ENCODE measurements at regions of chr12 and their contacts with region 1.

Region 1: DNA sequence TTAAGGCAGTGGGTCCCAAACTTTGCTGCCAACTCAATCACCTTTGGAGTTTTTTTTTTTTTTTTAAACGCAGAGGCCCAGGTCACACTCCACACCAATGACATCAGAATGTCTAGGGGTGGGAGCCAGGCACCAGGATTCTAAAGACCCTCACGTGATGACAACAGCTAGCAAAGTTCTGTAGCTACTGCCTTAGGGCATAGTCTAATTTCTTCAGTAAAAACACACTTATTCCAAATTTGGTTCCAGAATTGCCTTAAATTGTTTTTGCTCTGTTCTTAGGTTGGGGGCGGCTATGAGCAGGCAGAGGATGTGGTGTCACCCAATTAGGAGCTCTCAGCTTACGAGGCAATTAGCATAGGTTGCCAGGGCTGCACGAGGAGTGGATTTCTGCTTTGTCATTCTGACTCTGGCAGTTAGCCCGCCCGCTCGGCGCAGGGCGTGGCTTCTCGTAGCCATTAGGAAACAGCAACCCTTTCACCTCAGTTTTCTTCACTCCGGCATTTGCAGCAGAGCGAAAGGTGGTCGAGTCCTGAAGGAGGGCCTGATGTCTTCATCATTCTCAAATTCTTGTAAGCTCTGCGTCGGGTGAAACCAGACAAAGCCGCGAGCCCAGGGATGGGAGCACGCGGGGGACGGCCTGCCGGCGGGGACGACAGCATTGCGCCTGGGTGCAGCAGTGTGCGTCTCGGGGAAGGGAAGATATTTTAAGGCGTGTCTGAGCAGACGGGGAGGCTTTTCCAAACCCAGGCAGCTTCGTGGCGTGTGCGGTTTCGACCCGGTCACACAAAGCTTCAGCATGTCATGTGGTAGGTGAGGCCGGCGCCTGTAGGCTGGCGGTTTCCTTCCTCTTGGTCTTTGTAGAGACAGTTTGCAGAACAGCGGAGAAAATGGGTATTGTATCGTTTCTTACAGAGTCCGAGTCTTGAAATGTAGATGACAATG is 16.7 kb upstream of the EID3 start:
- DNase-seq: peak; percentile 94
- H3K4me3 Mint-ChIP-seq: peak overlapping the region; percentile 96
- H3K27ac Mint-ChIP-seq: peak overlapping the region; percentile 98
- H3K4me1 Mint-ChIP-seq: peaks cover 12% of the 10 kb centered on the region
- H3K27me3 Mint-ChIP-seq: no peaks in the 10 kb centered on the region

Region 2: GRCh38 chr12:103956516-103957027 is 330.2 kb before region 1 on chr12:
- CTCF ChIA-PET with region 1: no interaction called
- intact Hi-C with region 1: loop called (anchors 1 kb)
- DNase-seq: peak; percentile 15
- H3K4me3 Mint-ChIP-seq: peak overlapping the region; percentile 92
- H3K27ac Mint-ChIP-seq: peak overlapping the region; percentile 93
- H3K4me1 Mint-ChIP-seq: peaks cover 48% of the 10 kb centered on the region
- H3K27me3 Mint-ChIP-seq: no peaks in the 10 kb centered on the region

Region 3: GRCh38 chr12:104137913-104138796 is 148.7 kb before region 1 on chr12 and contains the start of gene NFYB:
- CTCF ChIA-PET with region 1: no interaction called
- intact Hi-C with region 1: loop called (anchors 1 kb)
- DNase-seq: peak; percentile 95
- H3K4me3 Mint-ChIP-seq: peak within 1 kb of the TSS; percentile 84
- H3K27ac Mint-ChIP-seq: peak within 1 kb of the TSS; percentile 84
- H3K4me1 Mint-ChIP-seq: peaks cover 14% of the 10 kb centered on the region
- H3K27me3 Mint-ChIP-seq: no peaks in the 10 kb centered on the region
- total RNA-seq, gene NFYB: 23.3 to 28.3 TPM

Region 4: DNA sequence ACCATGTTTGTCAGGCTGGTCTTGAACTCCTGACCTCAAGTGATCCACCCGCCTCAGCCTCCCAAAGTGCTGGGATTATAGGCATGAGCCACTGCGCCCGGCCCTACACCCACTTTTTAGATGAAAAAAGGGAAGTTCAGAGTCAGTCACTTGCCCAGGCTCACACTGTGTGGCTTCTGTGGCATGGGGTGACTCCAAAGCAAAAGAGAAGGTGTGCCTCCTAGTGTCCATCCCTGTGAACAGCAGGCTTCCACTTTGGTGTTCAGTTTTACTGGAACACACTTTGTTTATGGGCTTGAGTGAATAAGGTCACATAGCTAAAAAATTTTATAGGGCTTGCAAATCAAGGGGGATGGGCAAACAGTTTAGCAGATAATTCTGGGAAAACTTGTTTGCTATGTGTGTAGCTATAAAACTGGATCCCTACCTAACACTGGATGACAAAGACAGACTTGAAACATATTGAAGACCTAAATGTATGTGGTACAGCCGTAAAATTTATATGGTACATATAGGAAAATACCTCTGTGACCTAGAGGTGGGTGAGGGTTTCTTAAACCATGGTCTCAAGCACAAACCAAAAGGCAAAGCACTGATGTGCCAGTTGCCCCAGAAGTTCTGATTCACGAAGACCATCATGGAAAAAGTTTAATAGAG is 71.7 kb after region 1 on chr12:
- CTCF ChIA-PET with region 1: no interaction called
- intact Hi-C with region 1: loop called (anchors 1 kb)
- DNase-seq: peak; percentile 86
- H3K4me3 Mint-ChIP-seq: no peak overlapping the region
- H3K27ac Mint-ChIP-seq: no peak overlapping the region
- H3K4me1 Mint-ChIP-seq: no peaks in the 10 kb centered on the region
- H3K27me3 Mint-ChIP-seq: no peaks in the 10 kb centered on the region

Region 5: GRCh38 chr12:104671407-104672098 is 384.7 kb after region 1 on chr12:
- CTCF ChIA-PET with region 1: no interaction called
- intact Hi-C with region 1: loop called (anchors 2 kb)
- DNase-seq: peak; percentile 98
- H3K4me3 Mint-ChIP-seq: peak overlapping the region; percentile 42
- H3K27ac Mint-ChIP-seq: peak overlapping the region; percentile 97
- H3K4me1 Mint-ChIP-seq: peaks cover 46% of the 10 kb centered on the region
- H3K27me3 Mint-ChIP-seq: no peaks in the 10 kb centered on the region

Region 6: GRCh38 chr12:105330283-105330930 is 1043.6 kb after region 1 on chr12 and contains the start of gene C12orf75:
- CTCF ChIA-PET with region 1: no interaction called
- intact Hi-C with region 1: loop called (anchors 1 kb)
- DNase-seq: peak; percentile 86
- H3K4me3 Mint-ChIP-seq: peak within 1 kb of the TSS; percentile 76
- H3K27ac Mint-ChIP-seq: peak within 1 kb of the TSS; percentile 14
- H3K4me1 Mint-ChIP-seq: peaks cover 35% of the 10 kb centered on the region
- H3K27me3 Mint-ChIP-seq: no peaks in the 10 kb centered on the region
- total RNA-seq, gene C12orf75: 41.1 to 48.5 TPM

Measured in activated naive CD4-positive, alpha-beta T cell treated with anti-CD3 and anti-CD28 coated beads for 36 hours (primary cell).